Mammary epithelial cell (primary cell): ENCODE measurements at regions of chr2 and their contacts with region 1.

Region 1: DNA sequence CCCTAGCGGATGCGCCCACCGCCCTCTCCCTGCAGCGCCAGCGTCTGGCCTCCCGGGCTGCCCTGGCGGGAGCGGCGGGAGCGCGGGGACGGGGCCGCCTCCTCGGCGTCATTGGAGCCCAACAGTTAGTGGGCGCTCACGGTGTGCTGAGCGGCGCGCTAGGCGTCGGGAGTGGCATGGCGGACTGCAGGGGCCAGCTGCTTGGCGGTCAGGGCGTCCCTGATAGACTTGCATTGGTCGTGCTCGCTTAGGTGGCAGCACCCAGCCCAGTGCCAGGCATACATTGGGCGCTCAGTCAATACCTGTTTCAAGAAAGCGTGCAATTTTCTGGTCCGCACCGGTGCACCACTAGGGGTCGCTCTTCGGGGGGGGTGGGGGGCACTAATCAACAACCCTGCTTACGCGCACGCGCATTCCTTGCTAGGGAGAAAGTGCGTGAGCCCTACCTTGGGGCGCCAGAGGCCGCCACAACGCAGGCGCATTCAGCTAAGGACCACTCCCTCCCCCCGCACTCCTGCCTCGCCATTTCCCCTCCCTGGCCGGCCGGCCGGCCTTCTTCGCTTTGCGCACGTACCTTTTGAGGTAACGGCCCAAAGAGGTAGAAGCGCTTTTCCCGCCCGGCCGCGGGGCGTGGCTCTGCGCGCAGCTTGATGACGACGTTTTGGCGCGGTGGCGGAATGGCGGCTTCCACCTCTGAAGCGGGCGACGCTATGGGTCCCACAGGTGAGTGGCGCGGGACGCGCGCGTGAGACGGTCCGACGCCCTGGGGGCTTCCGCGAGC is 411 bp upstream of the MZT2A start:
- DNase-seq: peak; percentile 98
- H3K4me3 ChIP-seq: peak overlapping the region; percentile 64 to 95 (median 78)
- H3K27ac ChIP-seq: peak overlapping the region; percentile 89
- H3K4me1 ChIP-seq: peaks cover 9% of the 10 kb centered on the region
- H3K27me3 ChIP-seq: no peaks in the 10 kb centered on the region
- CTCF ChIP-seq: peak; percentile 33 to 74

Region 2: DNA sequence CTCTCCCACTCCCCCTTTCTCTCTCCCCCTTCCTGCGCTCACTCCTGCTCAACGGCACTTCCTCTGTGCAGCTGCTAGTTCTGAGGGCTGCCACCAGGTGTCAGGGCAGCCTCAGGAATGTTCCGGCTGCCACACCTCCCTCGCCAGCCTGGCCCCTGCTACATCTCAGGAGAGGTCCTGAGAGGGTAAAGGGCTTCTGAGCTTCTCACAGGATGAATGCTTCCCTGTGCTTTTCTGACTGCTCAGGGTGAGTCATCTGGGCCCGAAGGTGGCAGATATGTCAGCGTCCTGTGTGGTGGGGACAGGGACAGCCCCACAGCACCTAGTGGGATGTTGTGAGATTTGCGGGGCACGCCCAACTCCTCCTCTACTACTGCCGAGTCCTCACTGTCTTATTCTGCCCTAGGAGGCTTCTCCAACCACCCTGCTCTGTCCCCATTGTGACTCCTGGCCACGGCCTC is 338.5 kb before region 1 on chr2:
- CTCF ChIA-PET with region 1: no interaction called
- dilution Hi-C with region 1: no loop called
- in situ Hi-C with region 1: no loop called
- intact Hi-C with region 1: loop called (anchors 5 kb)
- DNase-seq: peak; percentile 46
- H3K4me3 ChIP-seq: no peak overlapping the region
- H3K27ac ChIP-seq: no peak overlapping the region
- H3K4me1 ChIP-seq: no peaks in the 10 kb centered on the region
- H3K27me3 ChIP-seq: no peaks in the 10 kb centered on the region
- CTCF ChIP-seq: peak; percentile 77 to 91

Region 3: GRCh38 chr2:131413148-131413747 is 79.4 kb before region 1 on chr2:
- CTCF ChIA-PET with region 1: no interaction called
- dilution Hi-C with region 1: no loop called
- in situ Hi-C with region 1: no loop called
- intact Hi-C with region 1: loop called (anchors 10 kb)
- DNase-seq: peak; percentile 17
- H3K4me3 ChIP-seq: no peak overlapping the region
- H3K27ac ChIP-seq: no peak overlapping the region
- H3K4me1 ChIP-seq: no peaks in the 10 kb centered on the region
- H3K27me3 ChIP-seq: peaks cover 3% of the 10 kb centered on the region
- CTCF ChIP-seq: peak; percentile 64 to 76

Region 4: GRCh38 chr2:131521961-131522794 is 29.6 kb after region 1 on chr2:
- CTCF ChIA-PET with region 1: no interaction called
- dilution Hi-C with region 1: no loop called
- in situ Hi-C with region 1: no loop called
- intact Hi-C with region 1: loop called (anchors 5 kb)
- DNase-seq: no peak
- H3K4me3 ChIP-seq: no peak overlapping the region
- H3K27ac ChIP-seq: no peak overlapping the region
- H3K4me1 ChIP-seq: peaks cover under 1% of the 10 kb centered on the region
- H3K27me3 ChIP-seq: no peaks in the 10 kb centered on the region
- CTCF ChIP-seq: no peak